ENCODE measurements at regions of chr10 and their contacts with region 1.

Region 1: GRCh38 chr10:72375585-72375984 is 20.9 kb upstream of the DNAJB12 start:
- DNase-seq: no peak
- H3K4me3 ChIP-seq: no peak overlapping the region
- H3K27ac ChIP-seq: no peak overlapping the region
- H3K4me1 ChIP-seq: no peaks in the 10 kb centered on the region
- H3K27me3 ChIP-seq: no peaks in the 10 kb centered on the region
- CTCF ChIP-seq: peak; percentile 44 to 57 (median 47)
- EP300 ChIP-seq: no peak
- POLR2A ChIP-seq: no peak
- RAD21 ChIP-seq: peak; percentile 71 to 77

Region 2: GRCh38 chr10:72364239-72364777 is 11.3 kb before region 1 on chr10:
- CTCF ChIA-PET with region 1: interaction called, 44 read pairs
- POLR2A ChIA-PET with region 1: interaction called, 6 read pairs
- DNase-seq: peak; percentile 73 to 91
- H3K4me3 ChIP-seq: no peak overlapping the region
- H3K27ac ChIP-seq: no peak overlapping the region
- H3K4me1 ChIP-seq: peaks cover 0 to 2% (median under 1%) of the 10 kb centered on the region in 4 experiments; a peak in 1 of 7 replicates
- H3K27me3 ChIP-seq: no peaks in the 10 kb centered on the region
- CTCF ChIP-seq: peak; percentile 85 to 99 (median 87)
- EP300 ChIP-seq: no peak
- POLR2A ChIP-seq: peak in 1 of 2 experiments; percentile 44; a peak in 1 of 3 replicates
- RAD21 ChIP-seq: peak; percentile 97 to 98

Region 3: GRCh38 chr10:72385724-72386123 is 10.1 kb after region 1 on chr10:
- CTCF ChIA-PET with region 1: interaction called, 14 read pairs
- POLR2A ChIA-PET with region 1: no interaction called
- DNase-seq: no peak
- H3K4me3 ChIP-seq: no peak overlapping the region
- H3K27ac ChIP-seq: no peak overlapping the region
- H3K4me1 ChIP-seq: peaks cover 0 to 6% (median 5%) of the 10 kb centered on the region in 4 experiments; a peak in 4 of 7 replicates
- H3K27me3 ChIP-seq: no peaks in the 10 kb centered on the region
- CTCF ChIP-seq: no peak
- EP300 ChIP-seq: no peak
- POLR2A ChIP-seq: no peak
- RAD21 ChIP-seq: no peak

Region 4: GRCh38 chr10:72426986-72427385 is 51.4 kb after region 1 on chr10:
- CTCF ChIA-PET with region 1: interaction called, 13 read pairs
- POLR2A ChIA-PET with region 1: no interaction called
- DNase-seq: no peak
- H3K4me3 ChIP-seq: no peak overlapping the region
- H3K27ac ChIP-seq: no peak overlapping the region
- H3K4me1 ChIP-seq: peaks cover 0 to 3% (median 2%) of the 10 kb centered on the region in 4 experiments; a peak in 2 of 7 replicates
- H3K27me3 ChIP-seq: no peaks in the 10 kb centered on the region
- CTCF ChIP-seq: peak; percentile 6 to 38 (median 28); a peak in 3 of 4 replicates
- EP300 ChIP-seq: no peak
- POLR2A ChIP-seq: no peak
- RAD21 ChIP-seq: peak; percentile 33 to 41; a peak in 2 of 4 replicates

Region 5: DNA sequence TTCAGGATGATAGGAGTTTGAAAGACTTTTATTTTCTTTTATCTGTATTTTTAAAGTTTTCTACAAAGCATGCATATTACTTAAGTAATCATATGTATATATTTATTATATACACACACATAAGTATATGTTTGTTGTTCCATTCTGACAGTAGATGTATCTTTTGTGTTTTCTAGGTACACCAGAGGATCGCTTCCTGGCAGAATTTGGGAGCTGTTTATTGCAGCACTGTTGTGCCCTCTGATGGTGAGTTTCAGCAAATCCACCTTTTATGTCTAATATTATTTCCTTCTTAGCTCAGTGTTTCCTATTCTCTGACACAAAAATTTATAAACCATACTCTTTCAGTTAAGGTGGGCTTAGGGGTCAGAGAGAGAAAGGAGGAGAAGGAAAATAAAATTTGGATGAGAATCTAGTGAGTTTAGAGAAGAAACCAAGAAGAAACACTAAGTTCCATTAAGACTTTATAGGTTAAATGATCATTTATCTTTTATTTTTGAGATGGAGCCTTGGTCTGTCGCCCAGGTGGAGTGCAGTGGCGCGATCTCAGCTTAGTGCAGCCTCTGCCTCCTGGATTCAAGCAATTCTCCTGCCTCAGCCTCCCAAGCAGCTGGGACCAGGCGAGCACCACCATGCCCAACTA is 458.7 kb after region 1 on chr10:
- CTCF ChIA-PET with region 1: interaction called, 21 read pairs
- POLR2A ChIA-PET with region 1: no interaction called
- DNase-seq: peak in 1 of 2 experiments; percentile 1
- H3K4me3 ChIP-seq: no peak overlapping the region
- H3K27ac ChIP-seq: no peak overlapping the region
- H3K4me1 ChIP-seq: peaks cover 0 to 2% (median 0%) of the 10 kb centered on the region in 4 experiments; a peak in 1 of 7 replicates
- H3K27me3 ChIP-seq: no peaks in the 10 kb centered on the region
- CTCF ChIP-seq: peak in 2 of 3 experiments; percentile 63 to 67; a peak in 3 of 4 replicates
- EP300 ChIP-seq: no peak
- POLR2A ChIP-seq: no peak
- RAD21 ChIP-seq: peak; percentile 93